ENCODE measurements at regions of chr6 and their contacts with region 1.

Region 1: DNA sequence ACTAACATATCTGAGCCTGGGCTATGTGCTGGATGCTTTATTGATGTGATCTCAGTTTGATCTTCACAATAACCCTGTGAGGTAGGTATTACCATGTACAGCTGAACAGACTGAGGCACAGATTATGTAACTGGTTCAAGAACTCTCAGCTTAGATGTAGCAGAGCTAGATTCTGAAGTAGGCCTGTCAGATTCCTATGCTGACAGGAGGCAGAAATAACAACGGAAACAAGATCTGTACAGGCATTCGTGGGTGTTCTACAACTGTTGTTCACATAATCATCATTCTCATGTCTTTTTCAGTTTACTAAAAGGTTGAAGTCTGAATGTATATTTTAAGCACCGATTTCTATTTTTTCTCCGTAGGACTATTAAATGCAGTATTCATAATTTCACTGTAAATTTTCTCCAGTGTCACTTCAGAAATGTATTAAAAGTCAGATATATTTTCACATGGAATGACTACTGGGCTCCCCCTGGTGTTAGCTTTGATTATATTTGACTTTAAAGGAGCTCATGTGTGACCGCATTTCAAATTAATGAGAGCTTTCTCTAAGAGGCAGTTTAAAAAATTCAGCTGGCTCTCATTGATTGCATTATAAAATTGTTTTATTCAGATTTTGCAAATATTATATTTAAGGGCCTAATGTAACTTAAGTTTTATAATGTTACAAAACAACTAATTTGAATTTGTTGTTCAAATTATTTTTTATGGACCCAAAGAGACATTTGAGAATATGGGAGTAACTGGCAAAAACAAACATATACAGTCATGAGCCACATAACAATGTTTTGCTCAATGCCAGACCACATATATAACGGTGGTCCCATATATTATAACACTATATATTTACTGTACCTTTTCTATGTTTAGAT is 36.4 kb upstream of the SLC17A4 start:
- H3K4me3 Mint-ChIP-seq: no peak overlapping the region
- H3K27ac Mint-ChIP-seq: no peak overlapping the region
- H3K4me1 Mint-ChIP-seq: peaks cover 16% of the 10 kb centered on the region
- H3K27me3 Mint-ChIP-seq: peaks cover 2% of the 10 kb centered on the region

Region 2: GRCh38 chr6:25942561-25943147 is 224.6 kb after region 1 on chr6:
- intact Hi-C with region 1: loop called (anchors 2 kb)
- H3K4me3 Mint-ChIP-seq: no peak overlapping the region
- H3K27ac Mint-ChIP-seq: no peak overlapping the region
- H3K4me1 Mint-ChIP-seq: no peaks in the 10 kb centered on the region
- H3K27me3 Mint-ChIP-seq: peaks cover 4% of the 10 kb centered on the region

Region 3: GRCh38 chr6:26003102-26003694 is 285.1 kb after region 1 on chr6:
- intact Hi-C with region 1: loop called (anchors 5 kb)
- H3K4me3 Mint-ChIP-seq: no peak overlapping the region
- H3K27ac Mint-ChIP-seq: no peak overlapping the region
- H3K4me1 Mint-ChIP-seq: peaks cover 37% of the 10 kb centered on the region
- H3K27me3 Mint-ChIP-seq: no peaks in the 10 kb centered on the region